Activated B cell treated with CpG ODN at 0.5 μM for 24 hours (primary cell): ENCODE measurements at regions of chr5 and their contacts with region 1.

Region 1: DNA sequence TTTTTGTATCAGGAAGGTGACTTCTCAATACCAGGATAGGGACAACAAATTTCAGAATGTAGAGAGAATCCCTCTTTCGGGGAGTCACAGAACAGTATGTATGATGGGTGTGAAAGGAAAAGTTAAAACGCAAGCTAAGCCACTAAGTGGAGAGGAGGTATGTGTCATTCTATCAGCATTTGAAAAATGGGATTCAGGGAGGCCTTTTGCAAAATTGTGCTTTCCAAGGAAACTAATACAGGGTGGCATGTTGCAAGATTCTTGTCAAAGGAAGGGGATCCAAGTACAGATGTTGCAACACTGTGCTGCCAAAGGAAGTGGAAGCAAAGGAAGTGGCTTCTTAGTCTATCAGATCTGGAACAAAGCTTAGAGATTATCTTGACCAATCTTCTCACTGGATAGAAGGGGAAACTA is 12.6 kb upstream of the TNIP1 start:
- DNase-seq: no peak
- ATAC-seq: no peak
- H3K4me3 Mint-ChIP-seq: peak overlapping the region; percentile 81
- H3K27ac Mint-ChIP-seq: peak overlapping the region; percentile 94
- H3K4me1 Mint-ChIP-seq: peaks cover 74% of the 10 kb centered on the region
- H3K27me3 Mint-ChIP-seq: no peaks in the 10 kb centered on the region
- CTCF ChIP-seq: no peak

Region 2: GRCh38 chr5:151080623-151081430 is 12.7 kb before region 1 on chr5 and contains the start of gene TNIP1:
- CTCF ChIA-PET with region 1: interaction called, 3 read pairs
- POLR2A ChIA-PET with region 1: interaction called, 100 read pairs
- intact Hi-C with region 1: loop called (anchors 1 kb)
- DNase-seq: peak; percentile 99
- ATAC-seq: peak; percentile 81
- H3K4me3 Mint-ChIP-seq: peak within 1 kb of the TSS; percentile 93
- H3K27ac Mint-ChIP-seq: peak within 1 kb of the TSS; percentile 94
- H3K4me1 Mint-ChIP-seq: peaks cover 88% of the 10 kb centered on the region
- H3K27me3 Mint-ChIP-seq: no peaks in the 10 kb centered on the region
- CTCF ChIP-seq: no peak
- total RNA-seq, gene TNIP1: 506 and 512 TPM in 2 replicates

Region 3: GRCh38 chr5:151110122-151110681 is 16.7 kb after region 1 on chr5:
- CTCF ChIA-PET with region 1: interaction called, 22 read pairs
- POLR2A ChIA-PET with region 1: interaction called, 8 read pairs
- intact Hi-C with region 1: loop called (anchors 1 kb)
- DNase-seq: no peak
- ATAC-seq: no peak
- H3K4me3 Mint-ChIP-seq: peak overlapping the region; percentile 6
- H3K27ac Mint-ChIP-seq: peak overlapping the region; percentile 20
- H3K4me1 Mint-ChIP-seq: peaks cover 33% of the 10 kb centered on the region
- H3K27me3 Mint-ChIP-seq: no peaks in the 10 kb centered on the region
- CTCF ChIP-seq: no peak

Region 4: DNA sequence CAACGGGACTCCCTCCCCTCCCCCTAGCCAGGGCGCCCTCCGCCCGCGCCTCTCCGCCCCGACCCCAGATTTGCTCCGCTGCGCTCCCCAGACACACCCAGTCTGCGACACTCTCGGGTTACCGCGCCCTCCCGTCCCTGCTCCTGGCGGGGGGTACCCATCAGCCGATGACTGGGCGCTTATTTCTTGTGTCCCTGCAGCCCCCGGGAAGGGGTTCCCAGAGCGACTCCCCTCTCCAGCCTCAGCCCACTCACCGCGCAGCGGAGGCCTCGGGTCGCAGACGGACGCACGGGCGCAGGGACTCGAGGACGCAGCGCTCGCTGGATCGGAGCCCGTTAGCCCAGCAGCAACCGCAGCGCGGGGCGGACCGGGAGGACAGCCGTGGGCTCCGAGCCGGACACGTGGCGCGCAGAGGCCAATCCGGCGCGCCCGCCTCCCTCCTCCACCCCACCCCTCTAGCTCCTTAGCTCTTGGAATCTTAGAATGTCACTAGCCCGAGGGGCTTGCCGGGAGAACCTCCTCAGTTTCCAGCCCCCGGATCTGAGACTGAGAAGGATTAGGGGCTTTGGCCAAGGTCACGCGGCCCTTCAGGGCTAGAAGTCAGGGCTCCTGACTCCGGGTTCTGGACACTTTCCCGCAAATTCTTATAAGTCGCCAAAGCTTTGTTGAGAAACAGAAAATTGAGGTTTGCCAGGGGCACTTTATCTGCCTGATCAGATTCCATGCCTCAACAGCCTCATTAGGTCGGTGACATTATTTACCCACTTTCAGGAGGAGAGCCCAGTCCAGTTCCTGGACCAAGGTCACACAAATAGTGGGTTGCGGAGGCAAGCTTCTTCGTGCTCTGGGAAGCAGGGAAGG is 64.2 kb after region 1 on chr5 and contains the start of gene ANXA6:
- CTCF ChIA-PET with region 1: no interaction called
- POLR2A ChIA-PET with region 1: no interaction called
- intact Hi-C with region 1: no loop called
- DNase-seq: peak; percentile 62
- ATAC-seq: peak; percentile 72
- H3K4me3 Mint-ChIP-seq: peak within 1 kb of the TSS; percentile 91
- H3K27ac Mint-ChIP-seq: peak within 1 kb of the TSS; percentile 94
- H3K4me1 Mint-ChIP-seq: peaks cover 77% of the 10 kb centered on the region
- H3K27me3 Mint-ChIP-seq: no peaks in the 10 kb centered on the region
- CTCF ChIP-seq: no peak
- total RNA-seq, gene ANXA6: 367 and 379 TPM in 2 replicates